Right cardiac atrium (tissue), 5 donors: ENCODE measurements at regions of chr2 and their contacts with region 1.

Region 1: DNA sequence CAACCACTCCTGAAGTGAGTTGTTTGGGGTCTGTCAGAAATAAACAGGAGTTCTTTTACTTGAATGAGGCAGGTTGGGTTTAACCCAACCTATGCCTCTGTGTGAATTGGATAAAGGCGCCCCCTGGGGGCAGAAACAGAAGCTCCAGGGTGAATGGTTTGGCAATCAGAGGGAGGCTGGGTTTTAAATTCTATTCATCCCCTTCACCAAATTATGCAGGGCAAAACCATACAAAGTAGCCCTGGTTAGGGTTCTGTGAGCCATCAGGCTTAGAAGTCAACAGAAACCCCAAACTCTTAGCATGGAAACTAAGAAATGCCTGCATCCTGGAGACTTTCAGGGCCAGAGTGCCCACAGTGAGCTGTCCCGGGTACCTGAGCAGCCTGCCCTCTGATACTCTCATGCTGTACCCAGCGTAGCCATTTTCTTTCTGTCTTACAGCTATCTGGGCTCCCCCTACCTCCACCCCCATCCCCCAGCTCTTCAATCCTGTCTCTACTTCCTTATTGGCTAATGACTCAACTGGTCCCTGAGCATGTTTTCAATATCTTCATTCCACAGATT is 241.5 kb downstream of the ICOS start:
- DNase-seq: peak; percentile 57 to 84 (median 73)
- ATAC-seq: peak; percentile 64 to 73
- H3K4me3 ChIP-seq: no peak overlapping the region
- H3K27ac ChIP-seq: no peak overlapping the region
- H3K4me1 ChIP-seq: no peaks in the 10 kb centered on the region
- H3K27me3 ChIP-seq: no peaks in the 10 kb centered on the region

Region 2: DNA sequence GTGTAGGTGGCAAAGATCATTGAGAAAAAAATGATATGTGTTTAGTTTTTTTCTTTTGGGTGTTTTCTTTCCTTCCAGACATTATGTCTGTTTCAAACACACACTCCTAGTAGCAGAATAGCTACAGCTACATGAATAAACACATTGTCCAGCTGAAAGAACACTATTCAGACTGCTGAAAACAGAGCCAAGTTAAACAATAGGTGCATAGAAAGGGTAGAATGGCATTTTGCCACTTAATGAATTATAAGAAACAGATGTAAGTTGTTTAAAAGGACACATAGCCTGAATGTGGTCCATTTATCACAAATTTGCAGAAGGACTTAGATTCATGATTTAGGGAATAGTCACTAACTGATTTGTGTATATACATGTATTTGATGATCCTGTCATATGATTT is 290.4 kb before region 1 on chr2:
- intact Hi-C with region 1: no loop called
- DNase-seq: no peak
- ATAC-seq: no peak
- H3K4me3 ChIP-seq: no peak overlapping the region
- H3K27ac ChIP-seq: no peak overlapping the region
- H3K4me1 ChIP-seq: no peaks in the 10 kb centered on the region
- H3K27me3 ChIP-seq: no peaks in the 10 kb centered on the region

Region 3: DNA sequence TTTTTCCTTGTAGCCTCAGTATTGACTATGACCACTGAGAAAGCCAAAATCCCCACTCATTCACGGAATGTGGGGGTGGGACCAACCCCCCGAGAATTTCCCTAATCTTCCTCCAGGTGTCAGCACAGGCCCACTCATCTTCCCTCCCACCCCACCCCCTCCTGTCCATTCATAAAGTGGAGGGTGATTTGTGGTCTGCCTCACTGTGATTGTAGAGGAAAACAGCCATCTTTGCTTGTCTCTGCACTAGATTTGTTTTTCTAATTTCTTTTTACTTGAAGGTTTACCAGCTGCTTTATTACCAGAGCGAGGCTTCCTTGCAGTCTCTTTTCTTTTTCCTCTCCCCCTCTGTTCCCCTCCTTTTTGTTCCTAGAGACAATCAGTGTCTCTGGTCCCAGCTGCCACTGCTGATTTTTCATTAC is 69.7 kb before region 1 on chr2:
- intact Hi-C with region 1: loop called in 2 of 4 experiments (anchors 5 to 10 kb)
- DNase-seq: peak in 1 of 3 donors; percentile 48
- ATAC-seq: peak; percentile 79 to 81
- H3K4me3 ChIP-seq: no peak overlapping the region
- H3K27ac ChIP-seq: no peak overlapping the region
- H3K4me1 ChIP-seq: peaks cover 8% of the 10 kb centered on the region
- H3K27me3 ChIP-seq: no peaks in the 10 kb centered on the region

Region 4: DNA sequence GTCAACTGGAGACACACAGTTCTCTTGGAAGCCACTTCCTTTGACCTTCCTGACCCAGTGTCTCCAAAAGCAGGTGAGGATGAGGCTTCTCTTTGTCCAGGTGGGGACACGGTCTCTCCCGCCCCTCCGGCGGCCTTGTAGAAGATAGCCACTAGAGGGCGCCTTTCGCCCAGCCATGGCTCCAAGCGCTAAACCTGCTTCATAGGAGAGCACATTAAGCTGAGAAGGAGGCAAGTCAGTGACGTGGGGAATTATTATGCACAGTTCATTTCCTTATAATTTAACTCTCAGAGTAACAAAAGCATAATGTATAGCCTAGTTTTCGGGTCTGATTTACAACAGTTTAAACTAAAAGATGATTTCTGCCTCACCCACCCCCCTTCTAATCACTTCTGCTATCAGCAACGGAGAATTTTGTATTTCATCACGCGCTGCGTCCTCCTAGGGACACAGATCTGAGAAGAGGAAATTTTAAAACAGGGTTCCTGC is 32.8 kb before region 1 on chr2:
- intact Hi-C with region 1: loop called in 1 of 4 experiments (anchors 2 kb)
- DNase-seq: peak; percentile 72 to 88 (median 88)
- ATAC-seq: peak; percentile 95 to 98
- H3K4me3 ChIP-seq: peak overlapping the region; percentile 91
- H3K27ac ChIP-seq: peak overlapping the region; percentile 29
- H3K4me1 ChIP-seq: no peaks in the 10 kb centered on the region
- H3K27me3 ChIP-seq: no peaks in the 10 kb centered on the region